Activated CD4-positive, alpha-beta T cell treated with anti-CD3 and anti-CD28 coated beads, Interleukin-2, amount 10 ng/mL, durations not matched to agents 7 days and 5 days (primary cell): ENCODE measurements at regions of chr12 and their contacts with region 1.

Region 1: GRCh38 chr12:28350502-28350901 is 160.2 kb downstream of the CCDC91 start:
- DNase-seq: no peak
- H3K4me3 Mint-ChIP-seq: no peak overlapping the region
- H3K27ac Mint-ChIP-seq: no peak overlapping the region
- H3K4me1 Mint-ChIP-seq: peaks cover 7% of the 10 kb centered on the region
- H3K27me3 Mint-ChIP-seq: no peaks in the 10 kb centered on the region

Region 2: DNA sequence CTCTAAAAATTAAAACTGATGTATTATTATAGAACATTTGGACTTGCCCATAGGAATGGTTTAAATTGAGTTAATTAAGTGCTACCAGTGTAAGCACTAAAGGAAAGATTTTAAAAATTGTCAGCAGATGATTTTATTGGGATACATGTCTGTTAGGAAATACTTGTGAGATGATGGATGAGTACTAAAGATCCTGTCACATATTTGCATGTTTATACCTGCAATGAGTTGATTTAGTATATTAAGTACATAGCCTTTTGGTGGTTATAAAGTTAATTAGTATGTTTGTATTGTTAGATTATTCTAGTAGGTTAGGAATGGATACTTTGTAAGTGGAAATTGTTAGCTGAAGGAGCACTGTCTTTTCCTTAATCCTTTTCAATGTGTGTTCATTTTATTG is 93.1 kb before region 1 on chr12:
- CTCF ChIA-PET with region 1: no interaction called
- POLR2A ChIA-PET with region 1: interaction called, 11 read pairs
- DNase-seq: no peak
- H3K4me3 Mint-ChIP-seq: no peak overlapping the region
- H3K27ac Mint-ChIP-seq: no peak overlapping the region
- H3K4me1 Mint-ChIP-seq: peaks cover 17% of the 10 kb centered on the region
- H3K27me3 Mint-ChIP-seq: no peaks in the 10 kb centered on the region